Esophagus muscularis mucosa (tissue), 4 donors: ENCODE measurements at regions of chr20 and their contacts with region 1.

Region 1: GRCh38 chr20:46022411-46023147 is 6.4 kb upstream of the SLC12A5 start:
- DNase-seq: no peak
- H3K4me3 ChIP-seq: peak overlapping the region in 2 of 4 donors; percentile 45 to 55
- H3K27ac ChIP-seq: no peak overlapping the region
- H3K4me1 ChIP-seq: peaks cover 15 to 21% (median 20%) of the 10 kb centered on the region in 4 donors
- H3K27me3 ChIP-seq: peaks cover 0 to 100% (median 37%) of the 10 kb centered on the region in 4 donors
- CTCF ChIP-seq: peak; percentile 66 to 80 (median 69)
- EP300 ChIP-seq: no peak
- POLR2A ChIP-seq: no peak

Region 2: DNA sequence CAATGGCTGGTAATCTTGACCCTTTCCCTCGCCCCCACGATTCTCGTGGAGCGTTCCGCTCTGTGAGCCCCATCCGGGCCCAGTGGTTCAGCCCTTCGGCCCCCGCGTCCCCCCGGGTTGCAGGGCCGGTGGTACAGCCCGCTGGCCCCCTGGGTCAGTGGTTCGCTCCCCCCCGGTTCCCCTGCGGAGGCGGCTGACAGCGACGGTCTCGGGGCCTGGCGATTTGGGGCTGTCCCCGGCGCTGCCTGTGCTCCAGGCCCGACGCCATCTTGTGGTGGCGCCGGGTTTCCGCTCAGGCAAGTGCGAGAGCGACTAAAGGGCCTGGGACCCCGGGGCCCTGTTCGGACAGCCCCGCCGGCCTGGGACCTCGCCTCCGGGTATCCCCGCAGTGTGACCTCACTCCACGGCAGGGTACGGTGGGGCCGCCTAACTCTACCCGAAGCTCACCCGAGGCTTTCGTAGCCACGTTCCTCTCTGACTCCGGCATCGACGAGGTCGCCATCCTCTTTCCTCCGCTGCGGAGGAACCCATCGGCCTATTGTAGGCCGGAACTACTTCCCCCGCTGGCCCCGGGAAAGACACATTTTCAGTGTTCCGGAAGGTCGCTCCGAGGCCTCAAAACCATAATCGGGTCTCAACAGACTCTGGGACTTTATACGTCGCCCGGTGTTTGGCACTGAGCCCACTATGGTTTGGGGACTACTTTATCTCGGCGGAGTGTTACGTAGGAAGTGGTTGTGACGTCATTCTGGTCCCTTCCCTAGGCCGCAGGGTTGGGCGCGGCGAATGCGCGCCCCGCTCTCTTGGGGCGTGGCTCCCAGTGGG is 50.7 kb before region 1 on chr20 and contains the start of gene ZNF335:
- intact Hi-C with region 1: no loop called
- DNase-seq: peak; percentile 98
- H3K4me3 ChIP-seq: peak within 1 kb of the TSS; percentile 80 to 96 (median 88)
- H3K27ac ChIP-seq: peak within 1 kb of the TSS; percentile 97 to 99 (median 98)
- H3K4me1 ChIP-seq: peaks cover 15 to 39% (median 37%) of the 10 kb centered on the region in 4 donors
- H3K27me3 ChIP-seq: no peaks in the 10 kb centered on the region
- CTCF ChIP-seq: peak; percentile 41 to 49 (median 44)
- EP300 ChIP-seq: no peak
- POLR2A ChIP-seq: peak; percentile 71
- total RNA-seq, gene ZNF335: 12.9 to 19.0 (median 15.3) TPM

Region 3: DNA sequence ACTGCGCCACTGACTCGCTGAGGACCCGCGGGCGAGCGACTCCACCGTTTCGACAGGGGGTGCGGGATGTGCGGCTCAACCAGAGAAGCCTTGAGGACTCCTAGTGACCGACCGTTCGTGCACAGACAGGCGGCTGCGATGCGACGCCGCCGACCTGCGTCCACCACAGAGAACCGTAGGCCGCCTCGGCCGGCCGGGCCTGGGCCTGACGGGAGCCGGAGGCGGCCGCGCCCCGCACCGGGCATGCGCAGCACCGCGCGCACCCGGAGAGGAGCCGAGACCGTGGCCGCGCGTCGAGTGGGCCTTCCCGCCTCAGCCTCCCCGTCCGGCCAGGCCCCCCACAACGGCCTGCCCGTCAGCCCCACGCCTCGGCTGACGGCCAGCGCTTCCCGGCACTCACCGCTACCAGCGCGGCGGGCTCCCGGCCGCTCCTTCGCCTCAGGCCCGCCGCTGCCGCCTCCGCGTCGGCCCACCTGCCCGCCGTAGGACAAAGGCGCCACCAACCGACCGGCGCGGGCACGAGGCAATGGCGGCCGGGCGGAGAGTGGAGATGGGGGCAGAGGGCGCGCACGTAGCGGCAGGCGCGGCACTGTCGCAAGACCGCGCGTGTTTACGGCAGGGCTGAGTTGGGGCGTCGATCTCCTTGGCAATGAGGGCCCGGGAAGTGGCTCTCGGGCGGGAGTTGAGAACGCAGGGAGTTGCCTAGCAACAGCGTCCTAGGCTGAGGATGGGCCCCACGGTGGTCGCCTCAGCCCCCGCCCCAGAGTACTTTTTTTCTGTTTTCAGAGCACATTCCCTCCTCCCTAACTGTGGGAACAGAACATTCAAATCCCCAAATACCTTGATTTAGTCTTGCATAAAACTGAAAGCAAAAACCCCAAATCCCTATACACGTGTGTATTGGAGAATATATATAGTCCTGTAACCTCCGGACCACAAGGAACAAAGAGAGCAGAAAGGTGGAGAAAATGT is 67.1 kb after region 1 on chr20 and contains the start of gene NCOA5:
- intact Hi-C with region 1: loop called (anchors 5 kb)
- DNase-seq: peak; percentile 98
- H3K4me3 ChIP-seq: peak within 1 kb of the TSS; percentile 60 to 89 (median 86)
- H3K27ac ChIP-seq: peak within 1 kb of the TSS; percentile 94 to 99 (median 98)
- H3K4me1 ChIP-seq: peaks cover 40 to 51% (median 49%) of the 10 kb centered on the region in 4 donors
- H3K27me3 ChIP-seq: no peaks in the 10 kb centered on the region
- CTCF ChIP-seq: peak; percentile 17 to 47 (median 24)
- EP300 ChIP-seq: no peak
- POLR2A ChIP-seq: peak; percentile 76
- total RNA-seq, gene NCOA5: 17.4 to 36.8 (median 29.9) TPM

Region 4: DNA sequence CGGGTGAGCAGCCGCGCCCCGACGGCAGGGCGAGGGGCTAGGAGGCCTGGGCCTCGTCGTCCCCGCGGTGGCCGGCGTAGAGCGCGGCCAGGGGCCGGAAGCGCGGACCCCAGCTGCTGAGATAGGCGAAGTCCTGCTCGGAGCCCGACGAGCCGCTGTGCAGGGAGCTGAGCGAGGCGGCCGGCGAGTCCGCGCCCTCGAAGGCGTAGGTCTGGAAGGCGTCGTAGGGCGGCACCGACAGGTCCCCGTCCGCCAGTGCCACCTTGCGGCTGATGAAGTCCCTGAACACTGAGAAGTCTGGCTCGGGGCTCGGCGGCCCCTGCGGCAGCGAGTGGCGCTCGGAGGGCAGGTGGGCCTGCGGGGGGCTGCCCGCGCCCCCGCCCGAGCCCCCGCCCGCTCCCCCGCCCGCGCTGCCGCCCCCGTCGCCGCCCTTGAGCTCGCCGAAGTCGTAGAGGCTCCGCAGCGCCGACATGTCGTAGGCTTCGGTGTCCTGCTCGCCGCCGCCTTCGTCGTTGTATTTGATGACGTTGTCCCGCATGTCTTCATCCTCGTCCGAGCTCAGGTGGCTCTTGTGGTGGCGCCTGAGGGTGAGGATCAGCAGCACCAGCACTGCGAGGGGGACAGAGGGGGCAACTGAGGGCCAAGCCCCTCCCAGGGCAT is 152.0 kb after region 1 on chr20:
- intact Hi-C with region 1: loop called (anchors 2 kb)
- DNase-seq: no peak
- H3K4me3 ChIP-seq: peak overlapping the region in 2 of 4 donors; percentile 13 to 34
- H3K27ac ChIP-seq: no peak overlapping the region
- H3K4me1 ChIP-seq: peaks cover 0 to 11% (median 5%) of the 10 kb centered on the region in 4 donors
- H3K27me3 ChIP-seq: peaks cover 0 to 84% (median 22%) of the 10 kb centered on the region in 4 donors
- CTCF ChIP-seq: peak; percentile 48 to 77 (median 58)
- EP300 ChIP-seq: no peak
- POLR2A ChIP-seq: no peak